Dendritic cell treated with granulocyte-macrophage colony-stimulating factor and Interleukin-4, amounts not matched to agents 40 ng/mL and 50 ng/mL, for 4 days (primary cell): ENCODE measurements at regions of chr4 and their contacts with region 1.

Region 1: GRCh38 chr4:163611784-163612445 is 117.4 kb downstream of the TMA16 start:
- H3K4me3 Mint-ChIP-seq: peak overlapping the region; percentile 83
- H3K27ac Mint-ChIP-seq: peak overlapping the region; percentile 94
- H3K4me1 Mint-ChIP-seq: peaks cover 46% of the 10 kb centered on the region
- H3K27me3 Mint-ChIP-seq: no peaks in the 10 kb centered on the region

Region 2: GRCh38 chr4:163591614-163592020 is 20.3 kb before region 1 on chr4:
- intact Hi-C with region 1: loop called (anchors 2 kb)
- H3K4me3 Mint-ChIP-seq: peak overlapping the region; percentile 44
- H3K27ac Mint-ChIP-seq: peak overlapping the region; percentile 83
- H3K4me1 Mint-ChIP-seq: peaks cover 45% of the 10 kb centered on the region
- H3K27me3 Mint-ChIP-seq: no peaks in the 10 kb centered on the region

Region 3: DNA sequence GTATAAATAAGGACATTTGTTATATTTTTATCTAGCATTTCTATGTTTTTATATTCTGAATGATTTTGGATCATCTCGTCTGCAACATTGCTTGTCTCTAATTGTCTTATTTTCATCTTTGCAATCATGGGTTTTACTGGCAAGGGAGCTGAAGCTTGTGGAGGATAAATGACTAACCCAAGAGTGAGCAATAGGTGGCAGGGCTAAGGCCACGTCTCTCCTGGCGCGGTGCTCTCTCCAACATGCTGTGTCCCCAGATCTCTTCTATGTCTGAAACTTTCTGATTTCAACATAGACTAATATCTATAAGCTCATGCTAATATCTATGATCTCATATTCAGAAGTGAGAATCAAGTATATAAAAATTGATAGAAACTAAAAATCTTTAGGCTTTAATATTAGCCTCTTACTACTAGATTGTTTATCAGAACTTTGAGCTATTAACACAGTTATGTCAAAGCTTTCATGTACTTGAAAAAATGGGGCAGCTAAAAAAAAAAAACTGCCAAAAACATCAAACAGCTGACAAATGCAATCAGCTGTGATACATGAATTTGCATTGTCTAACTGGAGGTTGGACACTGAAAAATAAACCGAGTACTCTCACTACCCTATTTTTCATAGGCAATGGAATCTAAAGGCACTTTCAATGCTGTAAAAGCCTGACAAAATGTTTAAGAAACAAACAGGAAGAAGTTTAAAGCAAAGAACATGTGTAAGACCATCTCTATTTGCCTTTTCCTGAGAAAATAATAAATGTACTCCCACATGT is 51.7 kb after region 1 on chr4:
- intact Hi-C with region 1: loop called (anchors 2 kb)
- H3K4me3 Mint-ChIP-seq: peak overlapping the region; percentile 9
- H3K27ac Mint-ChIP-seq: peak overlapping the region; percentile 88
- H3K4me1 Mint-ChIP-seq: peaks cover 42% of the 10 kb centered on the region
- H3K27me3 Mint-ChIP-seq: no peaks in the 10 kb centered on the region

Region 4: GRCh38 chr4:163744861-163745260 is 132.9 kb after region 1 on chr4:
- intact Hi-C with region 1: no loop called
- H3K4me3 Mint-ChIP-seq: no peak overlapping the region
- H3K27ac Mint-ChIP-seq: no peak overlapping the region
- H3K4me1 Mint-ChIP-seq: peaks cover 8% of the 10 kb centered on the region
- H3K27me3 Mint-ChIP-seq: no peaks in the 10 kb centered on the region

Region 5: DNA sequence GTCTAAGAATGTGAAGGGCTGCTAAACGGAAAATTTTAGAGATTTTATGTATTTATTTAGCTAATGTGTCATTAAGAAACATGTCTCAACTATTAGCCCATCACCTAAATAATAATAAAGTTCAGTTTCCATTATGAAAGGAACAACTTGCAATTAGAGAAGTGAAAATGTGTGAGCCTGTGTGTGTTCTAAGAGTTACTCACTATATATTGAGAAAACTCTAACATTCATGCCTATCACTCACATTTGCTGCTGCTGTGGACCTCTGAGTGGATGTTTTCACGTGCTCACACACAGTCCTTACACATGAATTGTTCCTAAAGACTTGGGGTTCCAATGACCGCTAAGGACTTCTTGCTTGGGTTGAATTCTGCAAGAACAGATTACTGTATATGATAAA is 246.6 kb after region 1 on chr4:
- intact Hi-C with region 1: no loop called
- H3K4me3 Mint-ChIP-seq: no peak overlapping the region
- H3K27ac Mint-ChIP-seq: no peak overlapping the region
- H3K4me1 Mint-ChIP-seq: no peaks in the 10 kb centered on the region
- H3K27me3 Mint-ChIP-seq: no peaks in the 10 kb centered on the region

Region 6: DNA sequence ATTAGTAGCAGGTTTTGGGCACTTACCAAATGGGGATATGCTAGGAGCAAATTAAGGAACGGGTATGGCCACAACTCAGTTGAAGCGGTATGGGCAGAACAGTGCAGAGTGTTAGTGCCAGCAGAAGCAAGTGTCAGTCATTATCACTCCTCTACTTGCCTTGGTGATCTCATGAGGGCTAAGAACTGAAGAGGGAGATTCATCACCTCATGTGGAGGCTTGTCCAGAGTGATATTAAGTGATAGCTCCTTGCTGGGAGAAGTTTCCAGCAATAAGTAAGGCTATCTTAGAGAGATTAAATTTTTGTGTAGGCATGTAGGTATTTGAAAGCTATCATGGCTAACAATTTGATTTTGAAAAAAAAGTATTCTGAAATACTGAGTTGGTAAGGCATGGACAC is 526.6 kb after region 1 on chr4:
- intact Hi-C with region 1: no loop called
- H3K4me3 Mint-ChIP-seq: no peak overlapping the region
- H3K27ac Mint-ChIP-seq: no peak overlapping the region
- H3K4me1 Mint-ChIP-seq: no peaks in the 10 kb centered on the region
- H3K27me3 Mint-ChIP-seq: no peaks in the 10 kb centered on the region

Region 7: GRCh38 chr4:164937576-164938270 is 1325.8 kb after region 1 on chr4:
- intact Hi-C with region 1: no loop called
- H3K4me3 Mint-ChIP-seq: no peak overlapping the region
- H3K27ac Mint-ChIP-seq: no peak overlapping the region
- H3K4me1 Mint-ChIP-seq: no peaks in the 10 kb centered on the region
- H3K27me3 Mint-ChIP-seq: peaks cover 2% of the 10 kb centered on the region